ENCODE measurements at regions of chr7 and their contacts with region 1.

Region 1: DNA sequence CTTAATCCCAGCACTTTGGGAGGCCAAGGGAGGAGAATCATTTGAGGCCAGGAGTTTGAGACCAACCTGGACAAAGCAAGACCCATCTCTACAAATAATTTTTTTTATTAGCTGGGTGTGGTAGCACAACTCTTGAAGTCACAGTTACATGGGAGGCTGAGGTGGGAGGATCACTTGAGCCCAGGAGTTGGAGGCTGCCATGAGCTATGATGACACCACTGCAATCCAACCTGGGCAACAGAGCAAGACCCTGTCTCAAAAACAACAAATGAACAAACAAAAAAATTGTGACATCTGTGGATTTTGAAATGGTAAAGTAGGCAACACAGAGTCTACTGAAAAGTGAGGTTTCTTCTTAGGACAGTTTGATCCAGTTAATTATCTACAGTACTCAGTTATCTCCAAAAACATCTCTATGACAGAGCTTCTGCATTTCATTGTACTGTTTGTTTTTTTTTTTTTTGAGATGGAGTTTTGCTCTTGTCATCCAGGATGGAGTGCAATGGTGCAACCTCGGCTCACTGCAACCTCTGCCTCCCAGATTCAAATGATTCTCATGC is 3.3 kb upstream of the ANKRD61 start:
- DNase-seq: no peak
- H3K4me3 ChIP-seq: no peak overlapping the region
- H3K27ac ChIP-seq: peak overlapping the region; percentile 84
- H3K4me1 ChIP-seq: peaks cover 38% of the 10 kb centered on the region
- H3K27me3 ChIP-seq: no peaks in the 10 kb centered on the region
- CTCF ChIP-seq: no peak

Region 2: DNA sequence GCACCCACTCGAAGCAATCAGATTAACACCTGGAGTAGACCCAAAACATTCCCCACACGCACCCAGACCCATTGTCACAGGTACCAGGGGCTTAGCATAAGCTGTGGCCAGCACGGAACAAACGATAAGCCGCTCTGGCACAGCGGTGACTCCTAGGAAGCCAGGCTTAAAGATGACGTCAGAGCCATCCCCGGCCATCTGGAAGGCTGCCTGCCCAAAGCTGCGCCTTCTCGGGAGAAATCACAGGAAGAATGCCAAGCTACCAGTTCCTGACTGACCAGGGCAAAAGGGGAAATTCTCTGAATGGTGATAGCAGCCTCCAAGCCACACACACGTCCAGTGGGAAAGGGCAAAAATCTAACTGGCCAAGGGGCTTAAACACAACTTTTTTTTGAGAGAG is 850.8 kb before region 1 on chr7:
- intact Hi-C with region 1: no loop called
- DNase-seq: peak; percentile 76
- H3K4me3 ChIP-seq: peak overlapping the region; percentile 5
- H3K27ac ChIP-seq: peak overlapping the region; percentile 54
- H3K4me1 ChIP-seq: peaks cover 10% of the 10 kb centered on the region
- H3K27me3 ChIP-seq: peaks cover 15% of the 10 kb centered on the region
- CTCF ChIP-seq: no peak

Region 3: GRCh38 chr7:6049780-6050179 is 21.9 kb after region 1 on chr7:
- intact Hi-C with region 1: loop called (anchors 2 kb)
- DNase-seq: no peak
- H3K4me3 ChIP-seq: no peak overlapping the region
- H3K27ac ChIP-seq: peak overlapping the region; percentile 21
- H3K4me1 ChIP-seq: peaks cover 9% of the 10 kb centered on the region
- H3K27me3 ChIP-seq: no peaks in the 10 kb centered on the region
- CTCF ChIP-seq: no peak